ENCODE measurements at regions of chr9 and their contacts with region 1.

Region 1: GRCh38 chr9:37840560-37841194 is 40.1 kb downstream of the DCAF10 start:
- DNase-seq: peak in 3 of 4 experiments; percentile 34 to 89 (median 41)
- ATAC-seq: peak; percentile 92
- H3K4me3 ChIP-seq: no peak overlapping the region
- H3K27ac ChIP-seq: peak overlapping the region; percentile 87
- H3K4me1 ChIP-seq: peaks cover 14 to 20% of the 10 kb centered on the region in 2 experiments
- H3K27me3 ChIP-seq: no peaks in the 10 kb centered on the region
- CTCF ChIP-seq: no peak
- EP300 ChIP-seq: peak; percentile 70
- POLR2A ChIP-seq: no peak
- RAD21 ChIP-seq: no peak

Region 2: GRCh38 chr9:37550781-37551180 is 289.9 kb before region 1 on chr9:
- CTCF ChIA-PET with region 1: no interaction called
- POLR2A ChIA-PET with region 1: no interaction called
- in situ Hi-C with region 1: no loop called
- intact Hi-C with region 1: no loop called
- DNase-seq: no peak
- ATAC-seq: no peak
- H3K4me3 ChIP-seq: no peak overlapping the region
- H3K27ac ChIP-seq: no peak overlapping the region
- H3K4me1 ChIP-seq: no peaks in the 10 kb centered on the region
- H3K27me3 ChIP-seq: no peaks in the 10 kb centered on the region
- CTCF ChIP-seq: no peak
- EP300 ChIP-seq: no peak
- POLR2A ChIP-seq: no peak
- RAD21 ChIP-seq: no peak

Region 3: GRCh38 chr9:37784616-37785483 is 55.8 kb before region 1 on chr9 and contains the start of gene EXOSC3:
- CTCF ChIA-PET with region 1: no interaction called
- POLR2A ChIA-PET with region 1: no interaction called
- in situ Hi-C with region 1: no loop called
- intact Hi-C with region 1: no loop called
- DNase-seq: peak; percentile 88 to 98 (median 90)
- ATAC-seq: peak; percentile 97
- H3K4me3 ChIP-seq: peak within 1 kb of the TSS; percentile 82
- H3K27ac ChIP-seq: peak within 1 kb of the TSS; percentile 91
- H3K4me1 ChIP-seq: peaks cover 8 to 24% of the 10 kb centered on the region in 2 experiments; a peak in 4 of 5 replicates
- H3K27me3 ChIP-seq: no peaks in the 10 kb centered on the region
- CTCF ChIP-seq: peak; percentile 26 to 41 (median 29); a peak in 3 of 6 replicates
- EP300 ChIP-seq: no peak
- POLR2A ChIP-seq: peak; percentile 98
- RAD21 ChIP-seq: peak in 1 of 2 experiments; percentile 38; a peak in 1 of 4 replicates
- polyA plus RNA-seq, gene EXOSC3: 18.5 to 29.6 TPM

Region 4: DNA sequence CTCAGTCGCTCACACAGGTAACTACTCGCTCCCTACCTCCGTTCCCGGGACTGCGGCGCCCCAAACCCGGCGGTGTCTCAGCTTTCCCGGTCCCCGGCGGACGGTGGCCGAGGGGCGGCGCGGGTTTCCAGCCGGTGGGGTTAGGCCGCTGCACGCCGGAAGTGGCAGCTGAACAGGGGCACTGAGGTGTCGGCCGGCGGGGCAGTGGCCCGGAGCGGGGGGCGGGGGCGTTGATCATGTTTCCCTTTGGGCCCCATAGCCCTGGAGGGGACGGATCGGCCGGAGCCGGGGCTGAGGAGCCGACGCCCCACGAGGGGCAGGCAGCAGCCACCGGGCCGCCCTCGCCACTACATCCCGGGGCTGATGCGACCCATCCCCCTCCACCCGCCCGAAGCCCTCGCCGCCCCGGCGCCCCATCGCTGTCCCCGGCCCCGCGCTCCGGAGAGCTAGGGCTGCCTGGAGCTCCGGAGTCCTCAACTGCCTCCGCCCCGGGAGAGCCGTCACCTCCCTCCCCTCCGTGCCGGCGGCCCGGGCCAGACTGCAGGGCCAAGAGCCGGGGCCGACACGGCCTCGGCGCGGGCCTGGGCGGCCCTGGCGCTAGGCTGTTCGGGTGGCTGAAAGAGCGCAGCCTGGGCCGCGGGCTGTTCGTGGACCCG is 39.9 kb before region 1 on chr9 and contains the start of gene DCAF10:
- CTCF ChIA-PET with region 1: no interaction called
- POLR2A ChIA-PET with region 1: interaction called, 3 read pairs
- in situ Hi-C with region 1: no loop called
- intact Hi-C with region 1: loop called (anchors 5 kb)
- DNase-seq: peak; percentile 90 to 95 (median 94)
- ATAC-seq: peak; percentile 84
- H3K4me3 ChIP-seq: peak within 1 kb of the TSS; percentile 92
- H3K27ac ChIP-seq: peak within 1 kb of the TSS; percentile 85
- H3K4me1 ChIP-seq: peaks cover 8 to 17% of the 10 kb centered on the region in 2 experiments; a peak in 4 of 5 replicates
- H3K27me3 ChIP-seq: no peaks in the 10 kb centered on the region
- CTCF ChIP-seq: peak in 2 of 3 experiments; percentile 23 to 25; a peak in 2 of 6 replicates
- EP300 ChIP-seq: peak; percentile 72
- POLR2A ChIP-seq: peak; percentile 93
- RAD21 ChIP-seq: peak in 1 of 2 experiments; percentile 18; a peak in 2 of 4 replicates
- polyA plus RNA-seq, gene DCAF10: 6.8 to 7.4 TPM

Region 5: GRCh38 chr9:37827473-37828165 is 13.1 kb before region 1 on chr9:
- CTCF ChIA-PET with region 1: no interaction called
- POLR2A ChIA-PET with region 1: interaction called, 12 read pairs
- in situ Hi-C with region 1: no loop called
- intact Hi-C with region 1: no loop called
- DNase-seq: no peak
- ATAC-seq: no peak
- H3K4me3 ChIP-seq: no peak overlapping the region
- H3K27ac ChIP-seq: no peak overlapping the region
- H3K4me1 ChIP-seq: no peaks in the 10 kb centered on the region
- H3K27me3 ChIP-seq: no peaks in the 10 kb centered on the region
- CTCF ChIP-seq: no peak
- EP300 ChIP-seq: no peak
- POLR2A ChIP-seq: no peak
- RAD21 ChIP-seq: no peak

Measured in K562 (cell line).